ENCODE measurements at regions of chr1 and their contacts with region 1.

Region 1: GRCh38 chr1:24673336-24673735 is 30.2 kb downstream of the SRRM1 start:
- DNase-seq: no peak
- ATAC-seq: no peak
- H3K4me3 Mint-ChIP-seq: no peak overlapping the region
- H3K27ac Mint-ChIP-seq: no peak overlapping the region
- H3K4me1 Mint-ChIP-seq: peaks cover 2% of the 10 kb centered on the region
- H3K27me3 Mint-ChIP-seq: no peaks in the 10 kb centered on the region
- CTCF ChIP-seq: no peak

Region 2: GRCh38 chr1:24705260-24706073 is 32.1 kb after region 1 on chr1:
- CTCF ChIA-PET with region 1: no interaction called
- POLR2A ChIA-PET with region 1: interaction called, 12 read pairs
- intact Hi-C with region 1: no loop called
- DNase-seq: peak; percentile 17
- ATAC-seq: peak; percentile 96
- H3K4me3 Mint-ChIP-seq: peak overlapping the region; percentile 65
- H3K27ac Mint-ChIP-seq: peak overlapping the region; percentile 37
- H3K4me1 Mint-ChIP-seq: peaks cover 15% of the 10 kb centered on the region
- H3K27me3 Mint-ChIP-seq: no peaks in the 10 kb centered on the region
- CTCF ChIP-seq: no peak

Measured in activated B cell treated with CpG ODN at 0.5 μM for 24 hours (primary cell).